Heart left ventricle (tissue), 16 donors: ENCODE measurements at regions of chr2 and their contacts with region 1.

Region 1: DNA sequence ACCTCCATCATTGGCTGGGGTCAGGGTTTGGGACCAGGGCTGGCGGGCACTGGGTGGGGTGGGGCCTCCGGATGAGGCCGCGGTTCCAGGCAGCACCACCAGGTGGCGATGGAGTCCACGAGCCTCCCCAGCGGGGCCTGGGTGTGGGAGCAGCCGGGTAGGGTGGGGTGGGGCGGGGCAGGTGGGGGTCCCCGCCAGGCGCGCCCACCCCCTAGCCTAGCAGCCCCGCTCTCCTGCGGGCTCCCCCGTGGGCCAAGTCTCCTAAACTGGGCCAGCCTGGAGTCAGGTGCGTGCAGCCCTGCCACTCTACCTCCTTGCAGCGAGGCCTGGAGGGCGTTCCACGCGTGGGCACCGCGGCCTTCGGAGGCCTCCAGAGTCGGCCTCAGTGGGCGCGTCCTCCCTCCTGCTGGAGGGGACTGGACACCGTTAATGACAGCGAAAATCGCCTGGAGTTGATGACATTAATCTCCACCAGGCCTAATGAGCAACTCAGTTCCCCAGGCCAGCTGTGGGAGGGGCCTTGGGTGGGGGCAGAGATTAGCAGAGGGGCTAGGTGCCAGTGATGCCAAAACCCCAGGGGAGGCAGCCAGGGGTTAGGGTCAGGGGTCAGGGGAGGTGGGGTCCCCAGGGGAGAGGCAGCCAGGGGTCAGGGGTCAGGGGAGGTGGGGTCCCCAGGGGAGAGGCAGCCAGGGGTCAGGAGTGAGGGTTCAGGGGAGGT is 187.6 kb downstream of the TWIST2 start:
- DNase-seq: peak in 4 of 5 donors; percentile 33 to 81 (median 44)
- ATAC-seq: peak in 3 of 4 donors; percentile 79 to 91 (median 84)
- H3K4me3 ChIP-seq: no peak overlapping the region
- H3K27ac ChIP-seq: no peak overlapping the region
- H3K4me1 ChIP-seq: peaks cover 0 to 5% (median 0%) of the 10 kb centered on the region in 12 donors
- H3K27me3 ChIP-seq: peaks cover 0 to 18% (median 0%) of the 10 kb centered on the region in 9 donors
- CTCF ChIP-seq: peak; percentile 80 to 93 (median 89)
- POLR2A ChIP-seq: no peak

Region 2: DNA sequence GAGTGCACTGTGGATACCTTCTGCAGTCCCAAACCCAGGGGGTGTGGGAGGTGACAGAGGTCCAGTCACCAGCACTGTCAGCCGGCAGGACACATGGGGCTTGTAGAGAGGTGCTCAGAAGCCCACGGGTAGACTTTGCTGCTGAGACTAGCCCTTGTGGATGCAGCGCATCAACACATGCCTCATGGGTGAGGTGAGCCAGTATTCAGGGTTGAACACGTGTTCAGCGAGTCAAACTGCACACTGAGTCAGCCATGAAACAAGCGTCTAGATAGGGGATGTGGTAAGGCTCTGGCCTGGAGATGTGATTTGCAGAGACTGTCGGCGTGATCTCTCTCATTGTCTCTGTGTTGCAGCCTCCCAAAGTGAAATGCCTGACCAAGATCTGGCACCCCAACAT is 1010.5 kb before region 1 on chr2:
- intact Hi-C with region 1: no loop called
- DNase-seq: no peak
- ATAC-seq: no peak
- H3K4me3 ChIP-seq: no peak overlapping the region
- H3K27ac ChIP-seq: no peak overlapping the region
- H3K4me1 ChIP-seq: peaks cover 0 to 7% (median 0%) of the 10 kb centered on the region in 12 donors
- H3K27me3 ChIP-seq: no peaks in the 10 kb centered on the region
- CTCF ChIP-seq: no peak
- POLR2A ChIP-seq: no peak

Region 3: DNA sequence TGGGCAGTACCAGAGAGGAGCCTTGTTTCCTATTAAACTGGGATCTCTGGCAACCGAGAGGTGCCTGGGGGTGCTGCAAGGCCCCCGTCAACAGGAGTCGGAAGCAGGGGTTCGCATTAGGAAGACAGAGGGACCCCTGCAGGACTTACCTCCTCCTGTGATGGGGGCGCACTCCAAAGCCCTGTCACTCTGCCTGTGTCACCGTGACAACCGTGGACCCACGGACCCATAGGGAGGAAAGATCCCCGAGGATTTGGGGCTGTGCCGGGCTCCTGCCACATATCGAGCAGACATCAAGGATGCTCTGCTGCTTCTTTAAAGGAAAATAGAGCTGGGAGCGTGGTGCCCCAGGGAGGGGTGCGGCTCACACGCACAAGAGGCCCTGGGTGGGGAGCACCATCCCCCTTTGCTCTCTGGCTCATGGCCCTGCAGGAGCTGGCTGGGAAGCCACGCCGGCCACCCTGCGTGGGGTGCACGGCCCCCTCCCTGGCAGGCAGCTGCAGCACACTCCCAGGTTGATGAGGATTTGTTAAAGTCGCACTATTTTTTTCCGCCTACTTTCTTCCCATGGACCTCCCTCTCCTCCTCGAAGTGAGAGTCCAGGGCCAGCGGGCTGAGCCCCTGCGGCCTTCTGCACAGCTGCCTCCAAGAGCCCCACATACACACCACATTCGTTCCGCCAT is 20.2 kb before region 1 on chr2:
- intact Hi-C with region 1: no loop called
- DNase-seq: peak in 1 of 5 donors; percentile 44
- ATAC-seq: no peak
- H3K4me3 ChIP-seq: no peak overlapping the region
- H3K27ac ChIP-seq: no peak overlapping the region
- H3K4me1 ChIP-seq: no peaks in the 10 kb centered on the region
- H3K27me3 ChIP-seq: peaks cover 0 to 40% (median 15%) of the 10 kb centered on the region in 9 donors
- CTCF ChIP-seq: no peak
- POLR2A ChIP-seq: no peak

Region 4: GRCh38 chr2:239093952-239094351 is 58.4 kb after region 1 on chr2:
- intact Hi-C with region 1: no loop called
- DNase-seq: no peak
- ATAC-seq: no peak
- H3K4me3 ChIP-seq: no peak overlapping the region
- H3K27ac ChIP-seq: no peak overlapping the region
- H3K4me1 ChIP-seq: no peaks in the 10 kb centered on the region
- H3K27me3 ChIP-seq: no peaks in the 10 kb centered on the region
- CTCF ChIP-seq: no peak
- POLR2A ChIP-seq: no peak

Region 5: DNA sequence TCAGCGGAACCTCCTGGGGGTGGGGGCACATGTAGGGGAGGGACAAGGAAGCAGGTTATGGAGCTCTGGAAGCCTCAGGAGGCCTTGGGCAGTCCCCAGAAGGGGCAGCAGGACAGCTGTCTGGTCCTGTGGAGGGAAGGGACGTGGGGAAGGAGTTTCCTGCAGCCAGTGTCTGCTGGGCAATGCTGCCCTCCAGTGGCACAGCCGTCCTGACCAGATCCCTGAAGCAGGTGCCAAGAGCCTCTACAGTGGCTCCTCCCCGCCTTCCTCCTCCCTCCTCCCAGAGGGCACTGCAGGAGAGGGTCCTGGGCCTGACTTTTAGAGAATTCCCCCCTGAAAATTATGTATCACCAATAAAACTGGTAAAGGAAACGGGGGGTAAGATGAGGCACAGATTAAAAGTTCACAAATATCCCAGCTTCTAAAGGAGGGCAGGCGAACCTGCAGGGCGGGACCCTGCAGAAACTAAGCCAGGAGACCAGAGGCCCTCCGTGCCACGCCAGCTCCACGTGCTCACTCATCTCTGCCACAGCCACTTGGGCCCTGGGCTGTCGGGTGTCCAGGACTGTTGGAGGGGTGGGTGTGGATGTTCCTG is 70.9 kb after region 1 on chr2:
- intact Hi-C with region 1: loop called in 6 of 10 experiments (anchors 2 to 10 kb)
- DNase-seq: peak in 2 of 5 donors; percentile 38 to 54
- ATAC-seq: peak; percentile 29 to 78 (median 65)
- H3K4me3 ChIP-seq: no peak overlapping the region
- H3K27ac ChIP-seq: peak overlapping the region in 1 of 12 donors; percentile 4
- H3K4me1 ChIP-seq: peaks cover 0 to 22% (median 0%) of the 10 kb centered on the region in 12 donors
- H3K27me3 ChIP-seq: no peaks in the 10 kb centered on the region
- CTCF ChIP-seq: peak; percentile 13 to 60 (median 49)
- POLR2A ChIP-seq: no peak

Region 6: GRCh38 chr2:239882331-239882732 is 846.8 kb after region 1 on chr2:
- intact Hi-C with region 1: loop called (anchors 1 to 10 kb)
- DNase-seq: peak in 3 of 5 donors; percentile 31 to 50 (median 32)
- ATAC-seq: peak in 3 of 4 donors; percentile 62 to 73 (median 72)
- H3K4me3 ChIP-seq: no peak overlapping the region
- H3K27ac ChIP-seq: no peak overlapping the region
- H3K4me1 ChIP-seq: peaks cover 0 to 8% (median 0%) of the 10 kb centered on the region in 12 donors
- H3K27me3 ChIP-seq: peaks cover 0 to 9% (median 0%) of the 10 kb centered on the region in 9 donors
- CTCF ChIP-seq: peak; percentile 45 to 73 (median 58)
- POLR2A ChIP-seq: no peak

Region 7: GRCh38 chr2:239979243-239980023 is 943.9 kb after region 1 on chr2:
- intact Hi-C with region 1: loop called in 1 of 10 experiments (anchors 10 kb)
- DNase-seq: no peak
- ATAC-seq: peak in 3 of 4 donors; percentile 48 to 73 (median 64)
- H3K4me3 ChIP-seq: no peak overlapping the region
- H3K27ac ChIP-seq: no peak overlapping the region
- H3K4me1 ChIP-seq: peaks cover 0 to 8% (median 0%) of the 10 kb centered on the region in 12 donors
- H3K27me3 ChIP-seq: no peaks in the 10 kb centered on the region
- CTCF ChIP-seq: peak in 5 of 12 donors; percentile 7 to 32 (median 26)
- POLR2A ChIP-seq: no peak

Region 8: DNA sequence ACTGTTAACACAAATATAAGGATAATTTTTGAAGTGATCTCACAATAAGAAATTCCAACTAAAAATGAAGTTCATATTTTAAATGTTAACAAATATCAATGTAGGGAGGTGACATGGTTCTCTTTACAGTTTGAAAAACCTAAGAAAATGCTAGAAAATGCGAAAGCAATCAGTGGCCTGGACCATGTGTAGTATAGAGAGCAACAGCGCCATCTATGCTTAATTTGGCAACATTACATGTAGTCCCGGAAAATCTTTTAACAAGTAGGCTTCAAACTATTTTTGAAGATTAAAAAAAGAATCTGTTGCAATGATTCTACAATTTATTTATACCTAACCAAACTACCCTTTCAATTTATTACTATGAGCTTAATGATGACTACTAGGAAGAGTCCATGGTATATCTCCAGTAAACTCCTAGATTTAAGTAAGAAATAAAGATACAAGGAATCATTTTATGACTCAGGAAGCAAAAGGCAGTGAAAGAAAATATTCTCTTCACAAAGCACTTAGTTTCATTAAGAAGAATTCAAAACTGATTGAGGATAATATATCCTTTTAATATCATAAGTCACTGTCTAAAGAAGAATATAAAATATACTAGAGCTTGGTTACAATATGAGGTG is 956.3 kb after region 1 on chr2:
- intact Hi-C with region 1: loop called (anchors 1 to 10 kb)
- DNase-seq: no peak
- ATAC-seq: peak in 1 of 4 donors; percentile 69
- H3K4me3 ChIP-seq: no peak overlapping the region
- H3K27ac ChIP-seq: no peak overlapping the region
- H3K4me1 ChIP-seq: peaks cover 0 to 3% (median 0%) of the 10 kb centered on the region in 12 donors
- H3K27me3 ChIP-seq: no peaks in the 10 kb centered on the region
- CTCF ChIP-seq: peak; percentile 73 to 91 (median 85)
- POLR2A ChIP-seq: no peak

Region 9: GRCh38 chr2:240136013-240136670 is 1100.6 kb after region 1 on chr2 and contains the start of gene COPS9:
- intact Hi-C with region 1: loop called in 6 of 10 experiments (anchors 5 to 10 kb)
- DNase-seq: peak; percentile 86 to 94 (median 89)
- ATAC-seq: peak; percentile 90 to 99 (median 98)
- H3K4me3 ChIP-seq: peak within 1 kb of the TSS; percentile 70 to 99 (median 92)
- H3K27ac ChIP-seq: peak within 1 kb of the TSS; percentile 21 to 85 (median 72)
- H3K4me1 ChIP-seq: peaks cover 5 to 22% (median 10%) of the 10 kb centered on the region in 12 donors
- H3K27me3 ChIP-seq: no peaks in the 10 kb centered on the region
- CTCF ChIP-seq: peak in 1 of 12 donors; percentile 40
- POLR2A ChIP-seq: peak in 1 of 2 donors; percentile 48
- total RNA-seq, gene COPS9: 130 to 262 (median 166) TPM

Region 10: DNA sequence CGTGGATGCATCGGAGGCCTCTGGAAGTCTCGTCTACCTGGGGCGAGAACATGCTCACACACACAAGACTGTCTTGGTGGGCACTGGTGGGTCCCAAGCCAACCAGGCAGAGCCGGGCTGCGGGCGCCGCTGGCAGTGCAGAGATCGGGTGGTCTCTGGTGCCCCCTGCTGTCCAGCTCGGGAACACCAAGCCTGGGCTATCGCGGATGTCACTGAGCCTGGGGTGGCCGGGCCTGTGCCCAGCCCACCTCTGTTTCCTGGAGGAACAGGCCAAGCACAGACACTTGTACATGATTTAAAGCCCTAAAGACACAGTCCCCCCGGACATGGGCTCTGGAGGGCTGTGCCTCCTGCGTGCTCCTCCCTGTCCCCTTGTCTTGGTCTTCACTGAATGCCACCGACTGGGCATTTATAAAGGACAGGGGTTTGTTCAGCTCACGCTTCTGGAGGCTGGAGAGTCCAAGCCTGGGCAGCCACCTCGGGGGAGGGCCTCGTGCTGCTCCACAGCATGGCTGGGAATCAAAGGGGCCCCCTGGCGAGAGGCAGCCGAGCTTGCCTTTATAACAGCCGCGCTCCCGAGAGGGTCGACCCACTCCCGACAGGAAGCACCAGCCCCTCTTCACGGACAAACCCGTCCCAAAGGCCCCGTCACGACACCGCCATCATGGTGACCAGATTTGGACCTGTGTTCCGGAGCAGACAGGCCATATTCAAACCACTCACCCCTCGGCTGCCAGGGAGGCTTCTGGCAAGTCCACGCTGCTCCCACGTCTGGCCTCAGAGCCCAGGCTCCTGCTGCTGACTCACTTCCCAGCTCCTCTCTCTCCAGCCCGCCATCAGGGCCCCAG is 1108.5 kb after region 1 on chr2:
- intact Hi-C with region 1: loop called in 7 of 10 experiments (anchors 1 to 10 kb)
- DNase-seq: peak; percentile 50 to 83 (median 64)
- ATAC-seq: peak; percentile 28 to 81 (median 80)
- H3K4me3 ChIP-seq: no peak overlapping the region
- H3K27ac ChIP-seq: no peak overlapping the region
- H3K4me1 ChIP-seq: peaks cover 0 to 6% (median 0%) of the 10 kb centered on the region in 12 donors
- H3K27me3 ChIP-seq: peaks cover 0 to 20% (median 5%) of the 10 kb centered on the region in 9 donors
- CTCF ChIP-seq: peak; percentile 4 to 96 (median 93)
- POLR2A ChIP-seq: no peak

Region 11: GRCh38 chr2:240705204-240705791 is 1669.8 kb after region 1 on chr2:
- intact Hi-C with region 1: no loop called
- DNase-seq: peak in 2 of 5 donors; percentile 22 to 40
- ATAC-seq: peak in 1 of 4 donors; percentile 41
- H3K4me3 ChIP-seq: no peak overlapping the region
- H3K27ac ChIP-seq: no peak overlapping the region
- H3K4me1 ChIP-seq: peaks cover 0 to 7% (median 0%) of the 10 kb centered on the region in 12 donors
- H3K27me3 ChIP-seq: peaks cover 0 to 48% (median 5%) of the 10 kb centered on the region in 9 donors
- CTCF ChIP-seq: no peak
- POLR2A ChIP-seq: no peak